IMR-90 (cell line): ENCODE measurements at regions of chr2 and their contacts with region 1.

Region 1: DNA sequence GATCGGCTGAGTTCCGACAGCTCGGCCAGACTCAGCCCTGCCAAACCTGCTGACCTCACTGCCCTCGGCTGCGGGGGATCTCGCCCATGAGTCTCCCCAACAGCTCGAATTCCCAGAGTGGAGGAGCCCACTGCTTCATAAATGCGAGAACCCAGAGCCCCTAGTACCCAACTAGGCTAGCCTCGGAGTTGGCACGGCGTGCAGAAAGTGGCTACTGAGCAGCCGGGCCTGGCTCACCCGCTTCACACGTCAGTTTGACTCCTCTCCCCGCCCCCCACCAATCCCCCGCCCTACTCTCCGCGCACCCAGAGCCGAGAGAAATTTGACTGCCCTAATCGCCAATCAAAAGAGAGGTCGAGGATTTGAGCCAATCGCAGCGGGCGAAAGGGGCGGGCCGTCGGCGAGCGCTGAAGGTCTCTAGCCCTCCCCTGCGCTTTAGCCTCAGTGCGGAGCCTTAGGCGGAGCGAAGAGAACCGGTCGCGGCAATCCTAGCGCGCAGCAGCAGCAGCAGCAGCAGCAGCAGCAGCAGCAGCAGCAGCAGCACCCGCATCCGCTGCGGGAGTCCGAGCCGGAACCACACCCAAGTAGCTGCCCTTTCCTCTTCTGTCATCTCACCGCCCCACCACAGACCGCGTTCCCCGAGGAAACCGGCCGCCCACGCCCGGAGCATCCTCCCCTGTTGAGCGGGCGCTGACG is at the start of gene GLS:
- DNase-seq: peak; percentile 96
- ATAC-seq: peak; percentile 90
- H3K4me3 ChIP-seq: peak within 1 kb of the TSS; percentile 66
- H3K27ac ChIP-seq: peak within 1 kb of the TSS; percentile 97
- H3K4me1 ChIP-seq: peaks cover 3% of the 10 kb centered on the region; the same call in 1 of the 2 replicates
- H3K27me3 ChIP-seq: no peaks in the 10 kb centered on the region
- CTCF ChIP-seq: no peak
- POLR2A ChIP-seq: peak; percentile 99
- RAD21 ChIP-seq: no peak
- total RNA-seq, gene GLS: 130 and 279 TPM in 2 replicates

Region 2: GRCh38 chr2:190835303-190835930 is 45.1 kb before region 1 on chr2:
- CTCF ChIA-PET with region 1: no interaction called
- POLR2A ChIA-PET with region 1: interaction called, 6 read pairs
- dilution Hi-C with region 1: no loop called
- in situ Hi-C with region 1: no loop called
- intact Hi-C with region 1: loop called (anchors 5 kb)
- DNase-seq: peak; percentile 89
- ATAC-seq: peak; percentile 82
- H3K4me3 ChIP-seq: no peak overlapping the region
- H3K27ac ChIP-seq: no peak overlapping the region
- H3K4me1 ChIP-seq: peaks cover 12% of the 10 kb centered on the region
- H3K27me3 ChIP-seq: no peaks in the 10 kb centered on the region
- CTCF ChIP-seq: no peak
- POLR2A ChIP-seq: no peak
- RAD21 ChIP-seq: no peak

Region 3: DNA sequence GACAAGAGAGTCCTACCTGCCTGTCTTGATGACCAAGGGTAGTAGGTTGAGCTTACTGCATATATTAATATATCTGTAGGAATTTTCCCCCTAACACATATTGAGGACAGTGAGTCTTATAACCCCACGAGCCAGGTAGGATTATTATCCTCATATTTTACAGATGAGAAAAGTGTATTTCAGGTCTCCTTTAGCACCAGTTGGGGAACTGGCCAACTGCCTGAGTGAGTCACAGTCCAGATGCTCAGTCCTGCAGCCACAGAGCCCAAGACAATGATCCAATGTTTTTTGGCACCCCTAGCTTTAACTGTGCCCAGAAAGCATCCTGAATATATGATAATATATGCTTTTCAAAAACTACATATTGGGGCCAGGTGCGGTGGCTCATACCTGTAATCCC is 30.8 kb before region 1 on chr2:
- CTCF ChIA-PET with region 1: interaction called, 12 read pairs
- POLR2A ChIA-PET with region 1: interaction called, 3 read pairs
- dilution Hi-C with region 1: no loop called
- in situ Hi-C with region 1: no loop called
- intact Hi-C with region 1: loop called (anchors 2 kb)
- DNase-seq: peak; percentile 88
- ATAC-seq: peak; percentile 75
- H3K4me3 ChIP-seq: no peak overlapping the region
- H3K27ac ChIP-seq: no peak overlapping the region
- H3K4me1 ChIP-seq: peaks cover 2% of the 10 kb centered on the region; the same call in 1 of the 2 replicates
- H3K27me3 ChIP-seq: no peaks in the 10 kb centered on the region
- CTCF ChIP-seq: no peak
- POLR2A ChIP-seq: no peak
- RAD21 ChIP-seq: no peak

Region 4: GRCh38 chr2:190860985-190861680 is 19.4 kb before region 1 on chr2:
- CTCF ChIA-PET with region 1: interaction called, 4 read pairs
- POLR2A ChIA-PET with region 1: interaction called, 5 read pairs
- dilution Hi-C with region 1: no loop called
- in situ Hi-C with region 1: no loop called
- intact Hi-C with region 1: loop called (anchors 1 kb)
- DNase-seq: peak; percentile 73
- ATAC-seq: peak; percentile 36
- H3K4me3 ChIP-seq: no peak overlapping the region
- H3K27ac ChIP-seq: peak overlapping the region; percentile 86; the same call in 1 of the 2 replicates
- H3K4me1 ChIP-seq: peaks cover 27% of the 10 kb centered on the region
- H3K27me3 ChIP-seq: no peaks in the 10 kb centered on the region
- CTCF ChIP-seq: no peak
- POLR2A ChIP-seq: no peak
- RAD21 ChIP-seq: no peak

Region 5: DNA sequence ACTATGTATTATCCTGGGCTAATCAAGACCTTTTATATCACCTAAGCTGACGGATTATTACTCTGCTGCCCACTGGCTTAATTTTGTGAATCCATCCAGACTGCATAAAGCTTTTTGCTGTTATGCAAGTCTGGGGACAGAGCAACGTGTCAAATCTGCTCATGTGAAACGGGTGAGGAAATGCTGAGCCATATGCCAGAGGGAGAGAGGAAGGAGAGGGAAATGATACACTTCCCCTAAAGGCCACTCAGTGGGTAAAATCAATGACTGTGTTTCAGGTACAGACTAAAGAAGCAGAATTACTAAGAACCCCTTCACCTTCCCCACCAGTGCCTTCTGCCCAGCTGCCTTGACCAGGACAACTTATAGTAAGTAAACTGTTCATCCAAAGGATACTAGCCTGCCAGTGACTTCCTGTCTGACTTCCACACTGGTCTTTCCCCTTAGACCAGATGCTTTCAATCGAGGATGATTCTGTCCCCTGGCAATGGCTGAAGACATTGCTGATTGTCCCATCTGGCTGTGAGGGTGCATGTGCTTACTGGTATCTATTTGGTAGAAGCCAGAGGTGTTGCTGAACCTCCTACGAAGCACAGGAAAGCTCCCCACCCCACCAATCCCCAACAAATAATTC is 90.5 kb after region 1 on chr2:
- CTCF ChIA-PET with region 1: no interaction called
- POLR2A ChIA-PET with region 1: no interaction called
- dilution Hi-C with region 1: no loop called
- in situ Hi-C with region 1: no loop called
- intact Hi-C with region 1: no loop called
- DNase-seq: no peak
- ATAC-seq: no peak
- H3K4me3 ChIP-seq: no peak overlapping the region
- H3K27ac ChIP-seq: no peak overlapping the region
- H3K4me1 ChIP-seq: no peaks in the 10 kb centered on the region; the same call in 1 of the 2 replicates
- H3K27me3 ChIP-seq: no peaks in the 10 kb centered on the region
- CTCF ChIP-seq: no peak
- POLR2A ChIP-seq: no peak
- RAD21 ChIP-seq: no peak

Region 6: DNA sequence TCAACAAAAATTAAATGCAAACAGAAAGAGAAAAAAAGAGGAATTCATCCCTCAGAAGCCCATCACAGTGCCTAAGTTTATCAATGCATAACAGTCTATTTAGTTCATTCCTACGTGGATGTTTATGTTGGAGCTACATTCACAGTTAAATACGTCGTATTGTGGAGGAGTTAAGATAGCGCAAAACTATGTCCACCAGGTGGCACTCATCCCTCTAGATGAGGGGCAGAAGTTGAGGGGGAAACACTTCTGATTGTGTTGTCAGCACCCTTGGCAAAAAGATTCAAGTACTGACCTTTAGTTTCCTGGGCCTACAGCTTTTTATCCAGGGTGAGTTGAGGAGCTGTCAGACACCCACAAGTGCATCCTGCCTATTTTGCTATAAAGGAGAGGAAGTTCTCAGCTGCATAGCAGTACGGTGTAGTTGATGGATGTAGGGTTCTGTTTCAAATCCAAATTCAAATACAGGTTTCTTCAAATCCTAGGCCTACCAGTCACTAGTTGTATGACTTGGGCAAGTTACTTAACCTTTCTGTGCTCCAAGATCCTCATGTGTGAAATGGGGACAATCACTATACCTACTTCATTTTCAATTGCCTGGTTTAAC is 337.9 kb after region 1 on chr2:
- CTCF ChIA-PET with region 1: no interaction called
- POLR2A ChIA-PET with region 1: no interaction called
- dilution Hi-C with region 1: no loop called
- in situ Hi-C with region 1: no loop called
- intact Hi-C with region 1: no loop called
- DNase-seq: peak; percentile 92
- ATAC-seq: peak; percentile 86
- H3K4me3 ChIP-seq: no peak overlapping the region
- H3K27ac ChIP-seq: peak overlapping the region; percentile 59; the same call in 1 of the 2 replicates
- H3K4me1 ChIP-seq: peaks cover 8% of the 10 kb centered on the region; the same call in 1 of the 2 replicates
- H3K27me3 ChIP-seq: no peaks in the 10 kb centered on the region
- CTCF ChIP-seq: peak; percentile 82
- POLR2A ChIP-seq: no peak
- RAD21 ChIP-seq: peak; percentile 83